Activated B cell treated with CpG ODN at 0.5 μM for 24 hours (primary cell): ENCODE measurements at regions of chr10 and their contacts with region 1.

Region 1: DNA sequence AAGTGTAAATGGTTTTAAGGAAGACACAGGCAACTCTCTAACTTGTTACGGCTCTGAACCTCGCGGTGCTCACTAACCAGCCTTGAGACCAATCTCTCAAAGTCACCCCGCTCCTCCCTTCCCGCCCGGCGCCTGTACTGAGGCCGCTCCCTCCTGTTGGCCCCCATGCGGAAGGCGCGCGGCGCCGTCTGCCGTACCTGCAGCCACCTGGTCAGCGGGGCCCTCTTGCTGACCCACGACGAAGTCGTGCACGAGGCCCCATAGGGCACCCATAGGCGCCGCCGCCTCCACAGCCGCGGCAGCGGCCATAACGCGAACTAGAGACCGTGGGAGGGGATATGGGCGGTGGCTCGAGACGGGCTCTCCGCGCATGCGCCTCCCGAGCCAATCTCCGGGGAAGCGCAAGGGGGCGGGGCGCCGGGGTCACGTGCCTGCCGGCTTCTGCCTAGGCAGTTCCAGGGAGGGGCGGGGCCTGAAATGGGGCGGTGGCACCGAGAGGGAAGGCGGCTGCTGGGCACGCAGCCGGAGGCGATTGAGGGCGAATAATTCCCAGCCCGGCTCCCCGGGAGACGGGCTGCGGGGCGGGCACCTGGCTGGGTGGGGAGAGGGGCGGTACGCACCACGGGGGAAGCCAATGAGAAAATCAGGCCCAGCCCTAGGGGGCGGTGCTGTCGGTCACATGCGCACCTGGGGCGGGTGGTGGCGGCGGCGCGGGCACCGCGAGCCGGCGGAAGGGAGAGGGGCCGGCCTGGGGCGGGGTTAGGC is at the start of gene MMS19:
- DNase-seq: peak; percentile 100
- ATAC-seq: peak; percentile 87
- H3K4me3 Mint-ChIP-seq: peak within 1 kb of the TSS; percentile 96
- H3K27ac Mint-ChIP-seq: peak within 1 kb of the TSS; percentile 96
- H3K4me1 Mint-ChIP-seq: peaks cover 35% of the 10 kb centered on the region
- H3K27me3 Mint-ChIP-seq: peaks cover 30% of the 10 kb centered on the region
- CTCF ChIP-seq: no peak
- total RNA-seq, gene MMS19: 83.0 and 89.2 TPM in 2 replicates

Region 2: GRCh38 chr10:95656291-95657164 is 1841.7 kb before region 1 on chr10 and contains the start of gene ALDH18A1:
- CTCF ChIA-PET with region 1: no interaction called
- POLR2A ChIA-PET with region 1: no interaction called
- intact Hi-C with region 1: loop called (anchors 5 kb)
- DNase-seq: peak; percentile 94
- ATAC-seq: peak; percentile 96
- H3K4me3 Mint-ChIP-seq: peak within 1 kb of the TSS; percentile 98
- H3K27ac Mint-ChIP-seq: peak within 1 kb of the TSS; percentile 86
- H3K4me1 Mint-ChIP-seq: peaks cover 31% of the 10 kb centered on the region
- H3K27me3 Mint-ChIP-seq: no peaks in the 10 kb centered on the region
- CTCF ChIP-seq: no peak
- total RNA-seq, gene ALDH18A1: 45.9 and 53.0 TPM in 2 replicates

Region 3: GRCh38 chr10:97334370-97335175 is 163.7 kb before region 1 on chr10 and contains the start of gene FRAT2:
- CTCF ChIA-PET with region 1: no interaction called
- POLR2A ChIA-PET with region 1: interaction called, 4 read pairs
- intact Hi-C with region 1: loop called (anchors 2 kb)
- DNase-seq: peak; percentile 90
- ATAC-seq: peak; percentile 91
- H3K4me3 Mint-ChIP-seq: peak within 1 kb of the TSS; percentile 87
- H3K27ac Mint-ChIP-seq: peak within 1 kb of the TSS; percentile 92
- H3K4me1 Mint-ChIP-seq: peaks cover 46% of the 10 kb centered on the region
- H3K27me3 Mint-ChIP-seq: no peaks in the 10 kb centered on the region
- CTCF ChIP-seq: no peak
- total RNA-seq, gene FRAT2: 9.7 and 10.9 TPM in 2 replicates

Region 4: GRCh38 chr10:97445722-97446639 is 52.3 kb before region 1 on chr10 and contains the starts of genes EXOSC1 and ZDHHC16:
- CTCF ChIA-PET with region 1: no interaction called
- POLR2A ChIA-PET with region 1: no interaction called
- intact Hi-C with region 1: loop called (anchors 1 kb)
- DNase-seq: peak; percentile 80
- ATAC-seq: peak; percentile 98
- H3K4me3 Mint-ChIP-seq: peak within 1 kb of the TSS; percentile 99
- H3K27ac Mint-ChIP-seq: peak within 1 kb of the TSS; percentile 93
- H3K4me1 Mint-ChIP-seq: peaks cover 43% of the 10 kb centered on the region
- H3K27me3 Mint-ChIP-seq: no peaks in the 10 kb centered on the region
- CTCF ChIP-seq: no peak
- total RNA-seq, gene EXOSC1: 47.4 and 53.8 TPM in 2 replicates
- total RNA-seq, gene ZDHHC16: 39.0 and 40.6 TPM in 2 replicates

Region 5: DNA sequence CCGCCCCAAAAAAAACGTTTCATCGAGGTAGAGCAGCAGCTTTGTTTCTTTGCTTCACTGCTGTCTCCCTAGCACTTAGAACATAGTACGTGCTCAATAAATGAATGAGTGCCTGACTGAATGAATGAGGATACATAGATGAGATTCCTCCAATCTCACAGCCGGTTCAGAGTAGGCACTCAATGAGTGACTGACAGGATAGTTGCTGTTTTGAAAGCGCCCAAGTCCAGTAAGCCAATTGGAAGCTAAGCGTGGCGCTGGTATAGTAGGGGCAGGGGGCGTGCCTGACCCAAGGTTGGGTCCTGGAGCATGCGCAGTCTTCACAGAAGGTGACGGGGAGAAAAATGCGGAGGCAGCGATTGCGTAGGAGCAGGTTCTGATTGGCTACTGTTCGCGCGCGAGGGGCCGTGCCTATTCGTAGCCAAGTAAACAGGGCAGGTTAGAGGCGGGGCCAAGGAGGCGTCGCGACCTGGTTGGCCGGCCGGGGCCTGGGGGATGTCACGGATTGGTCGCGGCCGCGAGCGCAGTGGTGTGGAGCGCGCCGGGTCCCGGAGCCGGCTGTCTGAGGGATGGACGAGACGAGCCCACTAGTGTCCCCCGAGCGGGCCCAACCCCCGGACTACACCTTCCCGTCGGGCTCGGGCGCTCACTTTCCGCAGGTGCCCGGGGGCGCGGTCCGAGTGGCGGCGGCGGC is 142.1 kb after region 1 on chr10 and contains the start of gene PI4K2A:
- CTCF ChIA-PET with region 1: no interaction called
- POLR2A ChIA-PET with region 1: interaction called, 3 read pairs
- intact Hi-C with region 1: loop called (anchors 1 kb)
- DNase-seq: peak; percentile 92
- ATAC-seq: peak; percentile 96
- H3K4me3 Mint-ChIP-seq: peak within 1 kb of the TSS; percentile 97
- H3K27ac Mint-ChIP-seq: peak within 1 kb of the TSS; percentile 90
- H3K4me1 Mint-ChIP-seq: peaks cover 23% of the 10 kb centered on the region
- H3K27me3 Mint-ChIP-seq: no peaks in the 10 kb centered on the region
- CTCF ChIP-seq: no peak
- total RNA-seq, gene PI4K2A: 15.0 and 15.1 TPM in 2 replicates

Region 6: GRCh38 chr10:98134431-98135221 is 636.4 kb after region 1 on chr10 and contains the start of gene R3HCC1L:
- CTCF ChIA-PET with region 1: no interaction called
- POLR2A ChIA-PET with region 1: no interaction called
- intact Hi-C with region 1: loop called (anchors 10 kb)
- DNase-seq: peak; percentile 93
- ATAC-seq: peak; percentile 91
- H3K4me3 Mint-ChIP-seq: peak within 1 kb of the TSS; percentile 94
- H3K27ac Mint-ChIP-seq: peak within 1 kb of the TSS; percentile 97
- H3K4me1 Mint-ChIP-seq: peaks cover 63% of the 10 kb centered on the region
- H3K27me3 Mint-ChIP-seq: no peaks in the 10 kb centered on the region
- CTCF ChIP-seq: no peak
- total RNA-seq, gene R3HCC1L: 24.4 and 24.9 TPM in 2 replicates